WTC11 (cell line): ENCODE measurements at regions of chr6 and their contacts with region 1.

Region 1: DNA sequence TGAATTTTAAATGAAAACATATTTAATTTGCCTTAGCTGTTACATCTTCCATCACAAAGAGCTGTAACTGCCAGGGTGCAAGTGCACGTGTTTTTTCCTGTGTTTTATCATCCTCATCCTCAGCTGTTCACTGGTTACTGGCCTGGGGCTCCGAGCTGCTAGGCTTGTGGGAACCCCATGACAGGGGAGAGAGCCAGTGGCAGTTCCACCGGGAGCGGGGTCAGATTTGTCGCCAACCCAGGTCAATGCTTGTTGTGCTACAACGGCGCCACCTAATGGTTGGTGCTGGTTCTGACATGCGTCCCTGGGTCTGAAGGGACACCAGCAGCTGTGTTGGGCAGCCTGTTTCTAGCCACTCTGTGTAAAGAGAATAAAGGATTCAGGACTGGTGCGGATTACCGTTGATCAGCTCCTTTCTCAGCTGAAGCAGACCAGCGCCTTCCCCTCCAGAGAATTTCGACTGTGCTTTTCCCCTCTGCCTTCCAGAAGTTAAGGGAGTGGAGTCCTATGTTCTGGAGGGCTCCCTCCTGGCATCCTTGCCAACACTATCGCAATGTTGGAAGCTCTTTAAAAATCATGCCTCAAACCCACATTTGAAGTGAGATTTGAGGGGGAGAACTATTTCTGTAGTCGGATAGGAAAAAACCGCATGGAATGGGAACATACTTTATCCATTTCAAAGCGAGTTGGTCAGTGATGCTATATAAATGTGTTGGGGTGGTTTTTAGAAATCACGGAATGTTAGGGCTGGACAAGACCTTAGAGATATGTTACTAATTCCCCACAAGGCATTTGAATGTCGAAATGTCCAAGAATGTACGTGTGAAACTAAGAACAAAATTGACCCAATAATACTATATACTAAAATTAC is 32.1 kb downstream of the SUMO4 start:
- DNase-seq: peak; percentile 98
- ATAC-seq: peak; percentile 98
- H3K4me3 Mint-ChIP-seq: no peak overlapping the region
- H3K27ac Mint-ChIP-seq: no peak overlapping the region
- H3K4me1 Mint-ChIP-seq: peaks cover 5% of the 10 kb centered on the region
- H3K27me3 Mint-ChIP-seq: no peaks in the 10 kb centered on the region
- CTCF ChIP-seq: peak; percentile 94

Region 2: DNA sequence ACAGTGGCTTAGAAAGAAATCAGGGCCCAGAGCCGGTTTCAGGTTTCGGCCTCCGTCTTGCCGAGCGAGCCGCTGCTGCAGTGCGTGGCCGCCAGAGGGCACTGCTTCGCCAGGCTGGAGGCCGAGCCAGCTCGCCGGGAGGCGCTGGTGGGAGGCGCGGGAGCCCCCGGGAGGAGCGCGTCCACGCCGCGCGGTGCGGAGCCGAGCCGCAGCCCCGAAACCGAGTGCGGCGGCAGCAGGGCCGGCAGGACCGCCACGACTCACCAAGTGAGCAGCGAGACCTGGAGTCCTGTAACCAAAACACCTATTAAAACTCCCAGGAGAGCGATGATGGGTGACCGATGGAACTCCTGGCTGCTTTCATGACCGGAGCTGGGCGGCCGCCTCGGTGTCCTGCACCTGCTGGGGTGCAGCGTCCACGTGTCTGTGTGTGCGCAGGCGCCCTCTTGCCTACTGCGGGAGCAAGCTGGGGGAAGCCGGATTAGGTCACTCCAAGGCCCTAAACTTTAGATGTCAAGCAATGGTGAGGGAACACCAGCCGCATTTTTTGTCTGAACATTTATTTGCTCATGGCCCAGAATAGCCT is 872.2 kb before region 1 on chr6:
- CTCF ChIA-PET with region 1: interaction called, 10 read pairs
- POLR2A ChIA-PET with region 1: no interaction called
- DNase-seq: peak; percentile 85
- ATAC-seq: peak; percentile 86
- H3K4me3 Mint-ChIP-seq: peak overlapping the region; percentile 36; the same call in 1 of the 2 replicates
- H3K27ac Mint-ChIP-seq: no peak overlapping the region
- H3K4me1 Mint-ChIP-seq: 0 out of 2 replicates have a peak, but pooled peaks cover 6% of the 10 kb centered on the region
- H3K27me3 Mint-ChIP-seq: peaks cover 21% of the 10 kb centered on the region
- CTCF ChIP-seq: peak; percentile 94

Region 3: DNA sequence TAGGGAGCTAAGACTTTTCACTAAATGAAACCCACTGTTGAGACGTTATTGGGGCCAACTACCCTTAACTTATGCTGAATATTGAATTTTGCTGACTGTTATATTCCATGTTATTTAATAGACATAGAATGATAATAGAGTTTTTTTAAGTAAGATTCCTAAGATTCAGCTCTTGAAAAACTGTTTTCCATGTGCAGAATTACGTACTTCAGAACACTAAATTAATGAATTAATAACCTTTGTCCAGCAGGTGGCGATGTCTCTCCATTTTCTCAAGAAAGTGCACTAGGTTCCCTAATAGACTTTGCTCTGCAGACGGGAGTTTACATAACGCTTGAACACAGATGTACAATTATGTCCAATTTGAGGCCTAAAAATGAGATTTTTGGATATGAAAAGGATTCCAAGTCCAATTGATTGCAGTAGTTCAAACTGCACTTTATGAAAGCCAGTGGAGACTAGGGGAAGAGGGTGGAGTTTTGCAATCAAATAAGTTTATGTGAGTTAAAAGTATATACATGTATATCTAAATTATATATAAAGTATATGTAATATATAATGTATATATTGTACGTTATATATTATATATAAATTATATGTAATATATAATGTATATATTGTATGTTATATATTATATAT is 403.3 kb before region 1 on chr6:
- CTCF ChIA-PET with region 1: interaction called, 15 read pairs
- POLR2A ChIA-PET with region 1: no interaction called
- DNase-seq: no peak
- ATAC-seq: no peak
- H3K4me3 Mint-ChIP-seq: no peak overlapping the region
- H3K27ac Mint-ChIP-seq: no peak overlapping the region
- H3K4me1 Mint-ChIP-seq: peaks cover 28% of the 10 kb centered on the region
- H3K27me3 Mint-ChIP-seq: no peaks in the 10 kb centered on the region
- CTCF ChIP-seq: peak; percentile 63; the same call in 1 of the 2 replicates

Region 4: DNA sequence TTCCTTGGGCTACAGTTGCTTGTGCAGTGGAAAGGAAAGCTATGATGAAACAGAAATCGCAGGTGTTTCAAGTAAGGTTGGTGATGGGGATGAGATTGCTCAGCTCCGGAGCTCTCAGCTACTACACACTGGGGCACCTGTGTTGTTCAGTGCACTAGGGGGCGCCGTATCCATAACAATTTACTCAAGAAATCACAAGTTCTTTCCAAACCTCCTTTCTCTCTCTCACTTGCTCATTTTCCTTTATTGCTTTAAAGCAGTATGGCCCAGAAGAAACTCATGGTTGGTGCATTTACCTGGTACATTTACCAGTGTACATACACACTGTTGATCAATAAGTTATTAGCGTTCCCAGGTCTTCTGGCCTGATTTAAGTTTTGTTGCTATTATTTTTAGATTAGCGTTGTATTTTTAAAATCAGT is 349.8 kb before region 1 on chr6:
- CTCF ChIA-PET with region 1: interaction called, 35 read pairs
- POLR2A ChIA-PET with region 1: no interaction called
- DNase-seq: peak; percentile 81
- ATAC-seq: peak; percentile 91
- H3K4me3 Mint-ChIP-seq: no peak overlapping the region
- H3K27ac Mint-ChIP-seq: no peak overlapping the region
- H3K4me1 Mint-ChIP-seq: peaks cover 22% of the 10 kb centered on the region
- H3K27me3 Mint-ChIP-seq: no peaks in the 10 kb centered on the region
- CTCF ChIP-seq: peak; percentile 69

Region 5: GRCh38 chr6:149190224-149190831 is 241.8 kb before region 1 on chr6:
- CTCF ChIA-PET with region 1: interaction called, 29 read pairs
- POLR2A ChIA-PET with region 1: interaction called, 3 read pairs
- DNase-seq: peak; percentile 80
- ATAC-seq: peak; percentile 98
- H3K4me3 Mint-ChIP-seq: no peak overlapping the region
- H3K27ac Mint-ChIP-seq: no peak overlapping the region
- H3K4me1 Mint-ChIP-seq: no peaks in the 10 kb centered on the region
- H3K27me3 Mint-ChIP-seq: no peaks in the 10 kb centered on the region; the same call in none of the 2 replicates
- CTCF ChIP-seq: peak; percentile 24; the same call in 1 of the 2 replicates

Region 6: DNA sequence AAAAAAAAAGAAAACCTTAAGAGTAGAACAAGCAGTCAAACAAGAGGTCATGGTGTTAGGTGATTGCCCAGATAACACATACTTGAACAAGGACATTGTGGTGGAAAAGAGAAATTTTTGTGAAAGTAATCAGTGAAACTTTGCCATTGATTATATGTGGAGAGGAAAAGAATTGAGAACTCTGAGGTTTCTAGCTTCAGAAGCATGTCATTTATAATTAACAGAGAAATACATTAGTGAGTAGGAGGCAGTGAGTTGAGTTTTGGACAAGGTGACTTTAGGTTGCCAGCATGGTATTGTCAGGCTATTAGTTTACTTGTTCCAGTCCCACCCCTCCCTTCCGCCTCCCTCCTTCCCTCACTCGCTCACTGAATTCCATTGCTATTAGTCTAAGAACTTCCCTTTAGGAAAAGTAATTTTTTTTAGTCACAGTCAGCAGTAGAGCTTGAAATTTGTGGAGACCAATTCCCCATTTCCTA is 97.4 kb before region 1 on chr6:
- CTCF ChIA-PET with region 1: no interaction called
- POLR2A ChIA-PET with region 1: no interaction called
- DNase-seq: no peak
- ATAC-seq: peak; percentile 50
- H3K4me3 Mint-ChIP-seq: no peak overlapping the region
- H3K27ac Mint-ChIP-seq: peak overlapping the region; percentile 18; the same call in 1 of the 2 replicates
- H3K4me1 Mint-ChIP-seq: peaks cover 72% of the 10 kb centered on the region
- H3K27me3 Mint-ChIP-seq: no peaks in the 10 kb centered on the region
- CTCF ChIP-seq: no peak

Region 7: DNA sequence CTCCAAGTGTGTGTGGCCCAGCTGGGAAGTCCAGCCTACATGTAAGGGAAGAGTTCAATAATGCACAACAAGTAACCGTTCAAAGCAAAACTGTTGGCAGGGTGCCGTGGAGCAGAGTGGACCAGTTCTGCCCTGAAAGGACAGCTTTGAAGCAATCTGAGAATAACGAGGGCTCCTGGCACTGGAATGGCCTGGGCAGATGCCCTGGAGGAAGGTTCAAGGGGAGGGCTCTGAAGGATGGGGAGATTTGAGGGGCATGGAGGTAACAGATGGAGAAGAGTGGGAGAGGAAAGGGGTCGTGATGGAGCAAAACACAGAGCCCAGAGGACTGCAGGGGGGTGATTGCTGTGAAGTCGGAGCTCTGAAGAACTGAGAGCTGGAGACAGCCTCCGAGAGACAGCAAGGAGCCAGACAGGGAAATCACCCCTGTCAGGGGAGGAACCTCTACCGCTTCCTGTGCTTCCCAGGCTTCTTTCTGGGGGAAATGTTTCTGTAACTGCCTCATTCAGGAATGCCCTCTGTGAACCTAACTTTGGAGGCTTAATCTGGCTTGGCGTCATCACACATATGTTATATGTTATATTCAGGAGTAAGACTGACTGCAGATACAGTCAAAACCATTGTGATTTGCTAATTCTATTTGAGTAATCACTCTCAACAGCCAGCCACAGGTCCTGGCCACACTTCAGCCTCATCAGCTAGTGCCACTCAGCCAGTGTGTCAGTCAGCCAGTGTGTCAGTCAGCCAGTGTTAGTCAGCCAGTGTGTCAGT is 11.5 kb after region 1 on chr6:
- CTCF ChIA-PET with region 1: interaction called, 23 read pairs
- POLR2A ChIA-PET with region 1: no interaction called
- DNase-seq: no peak
- ATAC-seq: no peak
- H3K4me3 Mint-ChIP-seq: no peak overlapping the region
- H3K27ac Mint-ChIP-seq: no peak overlapping the region; the same call in 1 of the 2 replicates
- H3K4me1 Mint-ChIP-seq: peaks cover 3% of the 10 kb centered on the region; the same call in 1 of the 2 replicates
- H3K27me3 Mint-ChIP-seq: no peaks in the 10 kb centered on the region; the same call in 1 of the 2 replicates
- CTCF ChIP-seq: no peak